ENCODE measurements at regions of chr9 and their contacts with region 1.

Region 1: GRCh38 chr9:107784231-107784958 is 294.8 kb upstream of the KLF4 start:
- DNase-seq: no peak
- H3K4me3 ChIP-seq: no peak overlapping the region
- CTCF ChIP-seq: no peak

Region 2: GRCh38 chr9:107597743-107598217 is 186.6 kb before region 1 on chr9:
- in situ Hi-C with region 1: no loop called
- DNase-seq: no peak
- H3K4me3 ChIP-seq: no peak overlapping the region
- CTCF ChIP-seq: no peak

Region 3: GRCh38 chr9:107721705-107722245 is 62.6 kb before region 1 on chr9:
- in situ Hi-C with region 1: no loop called
- DNase-seq: no peak
- H3K4me3 ChIP-seq: no peak overlapping the region
- CTCF ChIP-seq: no peak

Region 4: DNA sequence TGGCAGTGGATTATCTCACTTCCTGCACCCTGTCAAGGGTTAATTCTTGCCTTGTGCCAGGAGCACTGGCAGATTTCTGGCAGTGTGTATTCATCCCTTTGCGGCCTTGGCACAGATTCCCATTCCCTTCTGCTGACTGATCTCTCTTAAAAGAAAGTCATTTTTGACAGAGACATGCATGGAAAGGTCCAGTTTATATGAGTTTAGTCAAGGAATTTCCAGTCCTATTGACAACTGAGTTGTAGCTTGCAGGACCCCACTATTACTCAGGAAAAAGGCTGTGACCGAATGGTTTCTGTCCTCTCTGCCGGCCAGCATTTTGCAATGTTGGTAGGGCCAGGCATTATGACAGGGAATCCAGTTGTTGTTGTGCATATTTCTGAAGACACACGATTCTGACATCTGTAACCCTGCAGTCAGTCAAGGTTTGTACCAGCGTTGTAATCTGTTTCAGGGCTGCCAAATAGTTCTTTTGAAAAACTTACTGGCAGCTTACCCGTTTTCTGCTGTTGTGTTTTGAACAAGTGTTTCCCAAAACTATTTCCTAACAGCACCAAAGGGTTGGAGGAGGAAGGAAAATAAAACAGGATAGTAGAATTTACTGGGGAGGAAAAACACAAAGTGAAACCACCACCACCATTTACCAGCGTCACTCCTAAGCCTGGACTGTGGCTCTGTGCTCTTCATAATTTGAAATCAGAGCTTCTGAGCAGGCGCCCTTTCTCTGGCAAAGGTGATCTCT is 51.4 kb before region 1 on chr9:
- in situ Hi-C with region 1: loop called (anchors 5 kb)
- DNase-seq: no peak
- H3K4me3 ChIP-seq: no peak overlapping the region
- CTCF ChIP-seq: no peak

Region 5: GRCh38 chr9:107841076-107841475 is 56.7 kb after region 1 on chr9:
- in situ Hi-C with region 1: loop called (anchors 5 kb)
- DNase-seq: no peak
- H3K4me3 ChIP-seq: no peak overlapping the region
- CTCF ChIP-seq: no peak

Region 6: GRCh38 chr9:108704156-108704852 is 919.9 kb after region 1 on chr9:
- in situ Hi-C with region 1: no loop called
- DNase-seq: no peak
- H3K4me3 ChIP-seq: no peak overlapping the region
- CTCF ChIP-seq: no peak